SK-N-SH (cell line): ENCODE measurements at regions of chr20 and their contacts with region 1.

Region 1: DNA sequence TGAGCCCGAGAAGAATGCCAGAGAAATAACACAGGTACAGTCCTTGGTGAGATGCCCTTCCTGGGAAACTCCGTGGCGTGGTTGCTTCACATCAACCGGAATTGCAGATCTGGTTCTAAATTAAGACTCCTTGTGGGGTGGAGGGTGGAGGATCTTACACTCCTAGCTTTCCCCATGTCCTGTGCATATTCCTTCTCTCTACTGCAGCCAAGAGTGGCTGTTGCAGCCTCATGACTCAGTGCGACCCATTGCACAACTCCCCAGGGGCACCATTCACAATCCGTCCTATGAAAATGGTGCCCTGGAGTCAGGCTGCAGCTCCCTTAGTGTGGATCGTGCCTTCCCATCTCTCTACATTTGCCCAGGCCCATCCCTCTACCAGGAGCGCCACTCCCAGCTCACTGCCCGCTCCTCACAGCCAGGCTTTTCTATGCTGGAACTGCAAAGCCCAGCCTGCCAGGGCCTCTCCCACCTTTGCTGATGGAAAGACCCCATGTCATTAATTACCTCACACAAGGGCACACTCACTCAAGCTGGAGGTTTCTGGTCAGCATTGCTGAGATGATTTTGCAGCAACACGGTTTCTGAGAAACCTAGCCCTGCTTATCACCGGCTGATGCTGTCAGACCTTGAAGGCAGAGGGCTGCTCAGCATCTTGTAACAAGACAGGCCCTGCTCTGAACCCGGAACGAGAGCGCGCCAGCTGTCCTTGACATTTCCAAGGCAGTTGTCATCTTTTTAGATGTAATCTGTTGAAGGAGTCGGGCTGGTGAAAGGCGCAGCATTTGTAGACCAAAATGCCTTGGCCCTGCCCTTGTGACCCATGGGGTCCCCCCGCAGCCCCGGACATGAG is 39.7 kb downstream of the SIRPA start:
- DNase-seq: peak; percentile 60
- H3K4me3 ChIP-seq: no peak overlapping the region; a peak in 1 of 4 replicates
- H3K27ac ChIP-seq: peak overlapping the region in 1 of 2 experiments; percentile 84; a peak in 2 of 4 replicates
- H3K4me1 ChIP-seq: peaks cover 13 to 53% of the 10 kb centered on the region in 2 experiments; a peak in 3 of 4 replicates
- H3K27me3 ChIP-seq: no peaks in the 10 kb centered on the region
- CTCF ChIP-seq: no peak
- EP300 ChIP-seq: peak in 1 of 2 experiments; percentile 81; a peak in 1 of 4 replicates
- RAD21 ChIP-seq: no peak

Region 2: GRCh38 chr20:1900321-1900801 is 34.6 kb before region 1 on chr20:
- CTCF ChIA-PET with region 1: interaction called, 10 read pairs
- POLR2A ChIA-PET with region 1: no interaction called
- DNase-seq: peak; percentile 86
- H3K4me3 ChIP-seq: no peak overlapping the region
- H3K27ac ChIP-seq: no peak overlapping the region; a peak in 1 of 4 replicates
- H3K4me1 ChIP-seq: peaks cover 13 to 32% of the 10 kb centered on the region in 2 experiments; a peak in 1 of 4 replicates
- H3K27me3 ChIP-seq: no peaks in the 10 kb centered on the region
- CTCF ChIP-seq: peak; percentile 66
- EP300 ChIP-seq: no peak
- RAD21 ChIP-seq: peak; percentile 67